ENCODE measurements at regions of chr10 and their contacts with region 1.

Region 1: DNA sequence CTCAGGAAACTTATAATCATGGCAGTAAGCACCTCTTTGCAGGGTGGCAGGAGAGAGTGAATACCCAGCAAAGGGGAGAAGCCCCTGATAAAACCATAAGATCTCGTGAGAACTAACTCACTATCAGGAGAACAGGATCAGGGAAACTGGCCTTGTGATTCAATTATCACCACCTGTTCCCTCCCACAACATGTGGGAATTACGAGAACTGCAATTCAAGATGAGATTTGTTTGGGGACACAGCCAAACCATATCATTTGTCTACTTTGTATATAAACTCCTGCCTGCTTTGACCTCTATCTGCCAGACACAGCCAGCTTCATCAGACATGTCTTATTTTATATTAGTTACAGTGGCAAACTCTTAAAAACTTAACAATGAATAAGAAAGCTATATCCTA is 50.4 kb downstream of the ARMC3 start:
- DNase-seq: no peak
- ATAC-seq: no peak
- H3K4me3 ChIP-seq: no peak overlapping the region
- H3K4me3 Mint-ChIP-seq: no peak overlapping the region
- H3K27ac ChIP-seq: no peak overlapping the region
- H3K27ac Mint-ChIP-seq: no peak overlapping the region
- H3K4me1 ChIP-seq: no peaks in the 10 kb centered on the region
- H3K4me1 Mint-ChIP-seq: no peaks in the 10 kb centered on the region
- H3K27me3 ChIP-seq: no peaks in the 10 kb centered on the region
- H3K27me3 Mint-ChIP-seq: peaks cover 3% of the 10 kb centered on the region in 2 donors

Region 2: GRCh38 chr10:22545643-22546042 is 432.6 kb before region 1 on chr10:
- CTCF ChIA-PET with region 1: interaction called in 1 of 2 experiments, 11 read pairs
- POLR2A ChIA-PET with region 1: no interaction called
- DNase-seq: no peak
- ATAC-seq: no peak
- H3K4me3 ChIP-seq: no peak overlapping the region
- H3K4me3 Mint-ChIP-seq: no peak overlapping the region
- H3K27ac ChIP-seq: no peak overlapping the region
- H3K27ac Mint-ChIP-seq: peak overlapping the region in 1 of 2 donors; percentile 16
- H3K4me1 ChIP-seq: peaks cover 2 to 19% of the 10 kb centered on the region in 2 experiments
- H3K4me1 Mint-ChIP-seq: peaks cover 16 to 19% (median 16%) of the 10 kb centered on the region in 3 donors
- H3K27me3 ChIP-seq: no peaks in the 10 kb centered on the region
- H3K27me3 Mint-ChIP-seq: no peaks in the 10 kb centered on the region

Region 3: DNA sequence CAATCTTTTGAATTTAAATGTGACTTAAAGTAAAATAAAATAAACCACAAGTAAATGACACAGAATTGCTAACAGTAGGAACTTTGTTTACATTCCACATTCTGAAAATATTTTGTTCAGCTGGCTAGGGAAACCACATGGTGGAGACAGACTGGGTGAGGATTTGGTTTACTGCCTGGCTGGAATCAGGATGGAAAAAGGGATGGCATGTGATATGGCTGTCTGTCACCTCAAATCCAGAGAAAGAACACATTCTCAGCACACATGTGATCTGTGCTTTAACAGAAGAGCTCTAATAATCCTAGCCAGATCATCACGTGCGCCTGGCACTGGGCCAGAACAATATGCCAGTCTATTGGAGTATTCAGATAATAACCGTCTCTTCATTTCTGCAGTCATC is 173.0 kb before region 1 on chr10:
- CTCF ChIA-PET with region 1: no interaction called
- POLR2A ChIA-PET with region 1: no interaction called
- DNase-seq: no peak
- ATAC-seq: no peak
- H3K4me3 ChIP-seq: no peak overlapping the region
- H3K4me3 Mint-ChIP-seq: no peak overlapping the region
- H3K27ac ChIP-seq: no peak overlapping the region
- H3K27ac Mint-ChIP-seq: no peak overlapping the region
- H3K4me1 ChIP-seq: no peaks in the 10 kb centered on the region
- H3K4me1 Mint-ChIP-seq: peaks cover 0 to 1% (median 0%) of the 10 kb centered on the region in 3 donors
- H3K27me3 ChIP-seq: no peaks in the 10 kb centered on the region
- H3K27me3 Mint-ChIP-seq: peaks cover 0 to 2% of the 10 kb centered on the region in 2 donors

Region 4: DNA sequence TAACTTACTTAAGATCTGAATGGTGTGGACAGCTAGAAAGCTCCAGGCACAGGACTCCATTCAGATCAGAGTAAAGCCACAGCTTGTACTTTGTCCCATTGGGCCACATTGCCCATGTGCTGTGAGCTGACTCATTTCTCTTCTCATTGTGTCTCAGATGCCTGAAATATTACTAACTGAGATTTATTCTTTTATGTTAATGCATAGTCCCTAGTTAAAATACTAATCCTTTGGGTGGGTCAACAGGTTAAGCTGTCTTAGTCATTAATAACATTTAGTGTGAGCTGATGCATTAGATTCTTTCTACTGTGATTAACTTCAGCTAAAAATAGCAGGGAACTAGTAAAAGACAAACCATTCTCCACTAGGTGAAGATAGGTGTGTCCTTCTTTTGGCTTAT is 155.2 kb before region 1 on chr10:
- CTCF ChIA-PET with region 1: no interaction called
- POLR2A ChIA-PET with region 1: no interaction called
- DNase-seq: no peak
- ATAC-seq: no peak
- H3K4me3 ChIP-seq: no peak overlapping the region
- H3K4me3 Mint-ChIP-seq: no peak overlapping the region
- H3K27ac ChIP-seq: no peak overlapping the region
- H3K27ac Mint-ChIP-seq: no peak overlapping the region
- H3K4me1 ChIP-seq: no peaks in the 10 kb centered on the region
- H3K4me1 Mint-ChIP-seq: no peaks in the 10 kb centered on the region
- H3K27me3 ChIP-seq: peaks cover 0 to 11% of the 10 kb centered on the region in 2 experiments
- H3K27me3 Mint-ChIP-seq: peaks cover 0 to 2% of the 10 kb centered on the region in 2 donors

Region 5: GRCh38 chr10:23001901-23002516 is 23.7 kb after region 1 on chr10:
- CTCF ChIA-PET with region 1: no interaction called
- POLR2A ChIA-PET with region 1: no interaction called
- DNase-seq: no peak
- ATAC-seq: no peak
- H3K4me3 ChIP-seq: no peak overlapping the region
- H3K4me3 Mint-ChIP-seq: no peak overlapping the region
- H3K27ac ChIP-seq: no peak overlapping the region
- H3K27ac Mint-ChIP-seq: no peak overlapping the region
- H3K4me1 ChIP-seq: no peaks in the 10 kb centered on the region
- H3K4me1 Mint-ChIP-seq: no peaks in the 10 kb centered on the region
- H3K27me3 ChIP-seq: peaks cover 0 to 20% of the 10 kb centered on the region in 2 experiments
- H3K27me3 Mint-ChIP-seq: peaks cover 36 to 53% of the 10 kb centered on the region in 2 donors

Measured in T-cell (primary cell).